ENCODE measurements at regions of chr15 and their contacts with region 1.

Region 1: DNA sequence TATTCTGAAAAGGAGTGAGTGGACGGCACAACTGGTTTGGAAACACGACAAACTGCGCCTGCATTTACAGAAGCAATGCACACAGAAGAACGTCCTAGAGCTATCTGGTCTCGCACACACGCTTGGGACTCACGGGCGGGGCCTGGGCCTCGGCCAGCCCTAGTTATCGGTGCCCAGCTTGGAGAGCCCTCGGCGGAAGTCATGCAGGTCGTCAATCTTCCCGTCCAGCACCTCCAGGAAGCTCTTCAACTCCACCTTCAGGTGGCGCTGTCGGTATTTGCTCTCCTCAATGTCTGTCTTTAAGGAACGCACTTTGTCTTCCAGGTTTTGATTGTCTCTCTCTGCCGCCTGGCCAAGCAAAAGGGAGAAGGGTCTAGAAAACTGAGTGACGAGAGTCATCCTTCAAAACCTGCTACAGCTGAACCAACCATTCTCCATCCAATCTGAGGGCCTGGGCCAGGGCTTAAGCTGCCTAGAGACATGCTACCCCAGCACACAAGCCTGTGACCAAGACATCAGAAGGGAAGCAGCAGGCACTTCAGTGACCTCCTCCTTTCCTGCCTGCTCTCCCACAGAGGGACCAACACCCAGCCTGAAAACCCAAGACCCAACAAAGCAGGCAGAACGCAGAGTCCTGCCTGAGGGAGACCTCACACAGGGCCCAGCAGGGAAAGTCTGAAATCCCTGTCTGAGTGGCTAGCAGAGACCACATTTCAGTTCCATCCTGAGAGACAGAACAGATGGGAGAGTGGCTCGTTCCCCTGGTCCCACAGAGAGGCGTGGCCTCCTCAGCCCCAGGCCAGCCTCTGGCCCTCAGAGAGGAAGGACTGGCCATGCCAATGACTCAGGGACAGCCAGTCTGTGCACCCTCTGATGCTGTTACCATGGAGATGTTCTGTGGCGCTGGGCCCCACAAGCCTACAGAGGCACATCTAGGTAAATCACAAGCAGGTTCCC is 40.4 kb downstream of the WHAMM start:
- DNase-seq: peak; percentile 35
- ATAC-seq: peak; percentile 87
- H3K4me3 ChIP-seq: no peak overlapping the region
- H3K27ac ChIP-seq: no peak overlapping the region
- H3K4me1 ChIP-seq: no peaks in the 10 kb centered on the region
- H3K27me3 ChIP-seq: no peaks in the 10 kb centered on the region
- CTCF ChIP-seq: peak; percentile 85

Region 2: GRCh38 chr15:82999905-83000671 is 150.3 kb after region 1 on chr15:
- CTCF ChIA-PET with region 1: interaction called, 4 read pairs
- POLR2A ChIA-PET with region 1: no interaction called
- in situ Hi-C with region 1: no loop called
- intact Hi-C with region 1: loop called (anchors 2 kb)
- DNase-seq: peak; percentile 51
- ATAC-seq: peak; percentile 82
- H3K4me3 ChIP-seq: peak overlapping the region; percentile 25 to 52
- H3K27ac ChIP-seq: peak overlapping the region; percentile 58
- H3K4me1 ChIP-seq: no peaks in the 10 kb centered on the region
- H3K27me3 ChIP-seq: no peaks in the 10 kb centered on the region
- CTCF ChIP-seq: peak; percentile 80

Measured in Panc1 (cell line).